ENCODE measurements at regions of chr16 and their contacts with region 1.

Region 1: DNA sequence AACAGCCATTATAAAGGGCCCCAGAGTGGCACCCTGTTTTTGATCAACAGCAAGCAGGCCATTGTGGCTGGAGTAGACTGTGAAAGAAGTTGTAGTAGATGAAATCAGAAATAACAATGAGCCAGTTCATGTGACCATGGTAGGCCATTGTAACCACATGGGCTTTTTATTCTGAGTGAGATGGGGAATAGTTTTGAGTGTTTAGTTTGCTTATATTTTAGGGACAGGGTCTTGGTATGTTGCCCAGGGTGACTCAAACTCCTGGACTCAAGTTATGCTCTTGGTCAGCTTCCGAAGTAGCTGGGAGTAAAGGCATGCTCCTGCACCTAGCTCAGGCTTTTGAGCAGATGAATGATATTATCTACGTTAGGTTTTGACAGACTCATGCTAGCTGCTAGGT is 12.0 kb downstream of the CBFB start:
- DNase-seq: no peak
- H3K4me3 ChIP-seq: no peak overlapping the region
- H3K27ac ChIP-seq: no peak overlapping the region
- H3K4me1 ChIP-seq: no peaks in the 10 kb centered on the region
- H3K27me3 ChIP-seq: no peaks in the 10 kb centered on the region
- CTCF ChIP-seq: no peak

Region 2: GRCh38 chr16:65263896-65264295 is 1777.0 kb before region 1 on chr16:
- CTCF ChIA-PET with region 1: no interaction called
- POLR2A ChIA-PET with region 1: interaction called, 10 read pairs
- intact Hi-C with region 1: no loop called
- DNase-seq: no peak
- H3K4me3 ChIP-seq: no peak overlapping the region
- H3K27ac ChIP-seq: no peak overlapping the region
- H3K4me1 ChIP-seq: no peaks in the 10 kb centered on the region
- H3K27me3 ChIP-seq: no peaks in the 10 kb centered on the region
- CTCF ChIP-seq: no peak

Region 3: GRCh38 chr16:67084345-67085028 is 43.6 kb after region 1 on chr16:
- CTCF ChIA-PET with region 1: no interaction called
- POLR2A ChIA-PET with region 1: no interaction called
- intact Hi-C with region 1: no loop called
- DNase-seq: no peak
- H3K4me3 ChIP-seq: no peak overlapping the region
- H3K27ac ChIP-seq: no peak overlapping the region
- H3K4me1 ChIP-seq: no peaks in the 10 kb centered on the region
- H3K27me3 ChIP-seq: no peaks in the 10 kb centered on the region
- CTCF ChIP-seq: no peak

Region 4: GRCh38 chr16:67741118-67741517 is 700.2 kb after region 1 on chr16:
- CTCF ChIA-PET with region 1: no interaction called
- POLR2A ChIA-PET with region 1: no interaction called
- intact Hi-C with region 1: no loop called
- DNase-seq: no peak
- H3K4me3 ChIP-seq: no peak overlapping the region
- H3K27ac ChIP-seq: no peak overlapping the region
- H3K4me1 ChIP-seq: no peaks in the 10 kb centered on the region
- H3K27me3 ChIP-seq: no peaks in the 10 kb centered on the region
- CTCF ChIP-seq: no peak

Measured in PC-9 (cell line).